HepG2 (cell line): ENCODE measurements at regions of chr9 and their contacts with region 1.

Region 1: GRCh38 chr9:5893591-5894236 is 3.0 kb downstream of the MLANA start:
- DNase-seq: peak; percentile 98
- ATAC-seq: peak; percentile 99
- H3K4me3 ChIP-seq: peak overlapping the region in 2 of 3 experiments; percentile 14 to 54; a peak in 2 of 6 replicates
- H3K27ac ChIP-seq: peak overlapping the region; percentile 93
- H3K4me1 ChIP-seq: peaks cover 69% of the 10 kb centered on the region
- H3K27me3 ChIP-seq: no peaks in the 10 kb centered on the region
- CTCF ChIP-seq: no peak; the same call in 1 of the 2 replicates
- EP300 ChIP-seq: peak; percentile 86 to 95; a peak in 3 of 4 replicates
- POLR2A ChIP-seq: peak; percentile 59 to 64
- RAD21 ChIP-seq: 0 out of 2 replicates have a peak, but pooled peaks have one; percentile 10

Region 2: GRCh38 chr9:5879419-5880181 is 14.1 kb before region 1 on chr9:
- CTCF ChIA-PET with region 1: no interaction called
- POLR2A ChIA-PET with region 1: no interaction called
- in situ Hi-C with region 1: no loop called
- intact Hi-C with region 1: no loop called
- DNase-seq: peak; percentile 46
- ATAC-seq: no peak
- H3K4me3 ChIP-seq: no peak overlapping the region
- H3K27ac ChIP-seq: no peak overlapping the region
- H3K4me1 ChIP-seq: peaks cover 8% of the 10 kb centered on the region
- H3K27me3 ChIP-seq: no peaks in the 10 kb centered on the region
- CTCF ChIP-seq: no peak
- EP300 ChIP-seq: no peak
- POLR2A ChIP-seq: no peak
- RAD21 ChIP-seq: no peak

Region 3: DNA sequence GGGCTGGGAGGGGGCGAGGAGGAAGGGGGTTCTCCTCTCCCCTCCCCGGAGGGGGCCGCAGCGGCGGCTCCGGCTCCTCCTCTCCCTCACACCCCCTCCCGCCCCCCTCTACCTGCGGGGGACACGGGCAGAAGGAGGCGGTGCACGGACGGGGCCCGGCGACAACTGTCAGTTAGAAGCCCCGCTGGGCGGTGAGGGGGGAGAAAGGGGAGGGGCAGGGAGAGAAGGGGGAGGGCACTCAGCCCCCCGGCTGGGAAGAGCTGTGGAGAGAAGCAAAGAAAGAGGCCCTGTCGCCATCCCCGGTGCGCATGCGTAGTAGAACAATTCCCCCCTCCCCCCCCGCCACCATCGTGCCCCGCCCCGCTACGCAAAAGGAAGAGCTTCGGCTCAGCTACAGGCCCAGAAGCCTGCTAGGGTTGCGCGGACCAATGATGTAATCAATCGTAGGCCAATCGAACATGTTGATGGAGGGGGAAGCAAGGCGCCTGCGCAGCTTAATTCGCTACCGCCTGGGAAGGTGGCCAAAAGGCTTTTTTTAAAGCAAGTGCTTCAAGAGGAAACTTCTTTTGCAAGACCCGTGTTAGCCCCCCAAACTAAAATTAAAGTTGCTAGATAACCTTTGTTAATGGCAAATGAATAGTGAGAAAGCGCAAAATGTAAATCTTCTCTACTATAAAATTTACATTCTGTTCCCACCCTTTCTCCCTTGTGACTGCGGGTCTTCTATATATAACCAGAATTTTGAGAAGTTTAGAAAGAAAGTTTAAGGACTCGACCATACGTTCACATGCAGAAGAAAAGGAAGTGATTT is 114.7 kb after region 1 on chr9:
- CTCF ChIA-PET with region 1: no interaction called
- POLR2A ChIA-PET with region 1: interaction called, 14 read pairs
- in situ Hi-C with region 1: no loop called
- intact Hi-C with region 1: loop called (anchors 5 kb)
- DNase-seq: peak; percentile 98
- ATAC-seq: peak; percentile 65
- H3K4me3 ChIP-seq: peak overlapping the region; percentile 83 to 96 (median 85)
- H3K27ac ChIP-seq: peak overlapping the region; percentile 83
- H3K4me1 ChIP-seq: peaks cover 57% of the 10 kb centered on the region
- H3K27me3 ChIP-seq: no peaks in the 10 kb centered on the region; a peak in 1 of 5 replicates
- CTCF ChIP-seq: no peak
- EP300 ChIP-seq: no peak
- POLR2A ChIP-seq: peak; percentile 52 to 62; a peak in 3 of 4 replicates
- RAD21 ChIP-seq: no peak